ENCODE measurements at regions of chr2 and their contacts with region 1.

Region 1: GRCh38 chr2:9548506-9548905 is 7.1 kb downstream of the ADAM17 start:
- DNase-seq: peak; percentile 69
- H3K4me3 ChIP-seq: peak overlapping the region; percentile 89
- H3K27ac ChIP-seq: peak overlapping the region; percentile 97
- H3K4me1 ChIP-seq: peaks cover 89% of the 10 kb centered on the region
- CTCF ChIP-seq: no peak

Region 2: DNA sequence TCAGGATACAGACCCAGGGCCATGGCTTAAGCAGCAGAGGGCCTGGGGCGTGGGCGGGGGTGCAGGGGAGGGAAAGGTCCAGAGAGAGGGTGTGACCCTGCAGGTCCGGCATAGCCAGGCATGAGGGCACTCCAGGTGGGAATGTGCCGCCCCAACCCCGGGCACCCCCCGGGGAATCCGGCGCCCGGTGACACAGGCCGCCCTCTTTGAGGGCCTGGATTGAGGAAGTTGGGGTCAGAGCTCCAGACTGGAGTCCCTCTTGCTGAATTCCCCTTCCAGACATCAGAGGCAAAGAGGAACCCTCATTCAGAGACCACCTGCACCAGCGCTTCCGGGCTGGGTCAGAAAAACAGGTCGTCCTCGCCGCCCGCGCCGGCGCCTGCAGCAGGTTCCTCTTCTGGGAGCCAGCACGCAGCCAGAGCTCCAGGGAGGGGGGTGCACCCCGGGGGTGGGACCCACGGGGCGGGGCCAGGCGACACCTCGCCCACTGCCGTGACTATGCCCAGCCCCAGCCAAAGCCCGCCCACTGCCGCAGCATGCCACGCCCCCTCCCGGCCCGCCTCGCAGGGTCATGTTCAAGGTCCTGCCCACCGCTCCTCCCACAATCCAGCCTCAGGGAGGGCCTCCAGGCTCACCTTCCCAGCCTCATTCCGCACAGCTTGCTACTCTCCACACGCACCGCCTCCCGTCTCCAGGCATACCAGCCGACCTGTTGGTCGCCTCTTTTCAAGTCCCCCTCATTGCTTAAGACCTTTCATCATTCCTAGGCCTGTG is 964.9 kb before region 1 on chr2:
- CTCF ChIA-PET with region 1: no interaction called
- POLR2A ChIA-PET with region 1: no interaction called
- intact Hi-C with region 1: loop called (anchors 10 kb)
- DNase-seq: peak; percentile 99
- H3K4me3 ChIP-seq: peak overlapping the region; percentile 61
- H3K27ac ChIP-seq: peak overlapping the region; percentile 98
- H3K4me1 ChIP-seq: peaks cover 97% of the 10 kb centered on the region
- CTCF ChIP-seq: no peak

Region 3: DNA sequence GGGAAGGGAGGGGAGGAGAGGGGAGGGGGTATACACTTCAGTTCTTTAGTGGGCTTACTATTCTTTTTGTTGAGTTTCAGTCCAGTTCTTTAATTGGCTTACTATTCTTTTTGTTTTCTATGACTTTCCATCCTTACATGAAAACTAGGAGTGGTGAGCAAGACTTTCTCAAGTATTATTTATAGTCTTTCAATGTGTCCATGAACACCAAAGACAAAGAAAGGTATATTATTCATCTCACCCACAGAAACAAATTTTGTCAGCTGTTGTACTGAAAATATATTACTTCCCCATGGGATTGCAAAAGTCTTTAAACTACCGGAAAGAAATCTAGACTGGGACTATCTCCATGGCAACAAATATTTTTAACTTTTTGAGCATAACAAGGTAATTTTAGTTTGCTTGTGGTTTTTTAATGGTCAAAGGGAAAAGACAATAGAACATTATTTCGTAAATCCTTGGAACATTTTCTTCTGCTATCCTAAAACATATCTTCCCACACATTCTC is 10.5 kb before region 1 on chr2:
- CTCF ChIA-PET with region 1: interaction called, 3 read pairs
- POLR2A ChIA-PET with region 1: interaction called, 50 read pairs
- intact Hi-C with region 1: no loop called
- DNase-seq: peak; percentile 40
- H3K4me3 ChIP-seq: peak overlapping the region; percentile 28
- H3K27ac ChIP-seq: peak overlapping the region; percentile 97
- H3K4me1 ChIP-seq: peaks cover 75% of the 10 kb centered on the region
- CTCF ChIP-seq: no peak

Region 4: GRCh38 chr2:9565436-9566153 is 17.1 kb after region 1 on chr2:
- CTCF ChIA-PET with region 1: no interaction called
- POLR2A ChIA-PET with region 1: interaction called, 14 read pairs
- intact Hi-C with region 1: no loop called
- DNase-seq: no peak
- H3K4me3 ChIP-seq: no peak overlapping the region
- H3K27ac ChIP-seq: no peak overlapping the region
- H3K4me1 ChIP-seq: no peaks in the 10 kb centered on the region
- CTCF ChIP-seq: no peak

Region 5: DNA sequence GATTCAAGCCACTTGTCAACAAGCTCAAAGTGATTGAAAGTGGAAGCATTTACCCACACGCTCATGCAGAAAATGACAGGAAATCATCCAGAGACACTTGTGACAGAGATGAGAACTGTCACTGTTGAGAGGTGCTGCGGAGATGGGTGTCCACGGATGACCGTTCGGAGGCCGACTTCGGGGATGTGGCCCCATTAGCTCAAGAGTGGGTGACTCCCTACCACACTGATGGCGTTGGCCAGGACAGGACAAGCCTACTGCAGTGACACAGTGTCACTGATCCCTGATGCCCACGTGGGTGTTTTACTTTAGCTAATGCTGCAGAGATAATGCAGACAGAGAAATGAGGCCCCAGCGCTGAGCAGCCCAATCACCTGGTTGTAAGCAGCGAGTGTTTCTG is 163.8 kb after region 1 on chr2:
- CTCF ChIA-PET with region 1: no interaction called
- POLR2A ChIA-PET with region 1: no interaction called
- intact Hi-C with region 1: no loop called
- DNase-seq: no peak
- H3K4me3 ChIP-seq: no peak overlapping the region
- H3K27ac ChIP-seq: no peak overlapping the region
- H3K4me1 ChIP-seq: no peaks in the 10 kb centered on the region
- CTCF ChIP-seq: no peak